ENCODE measurements at regions of chr9 and their contacts with region 1.

Region 1: GRCh38 chr9:91101611-91102168 is 260.0 kb downstream of the AUH start:
- DNase-seq: peak; percentile 97
- ATAC-seq: peak; percentile 91
- H3K4me3 Mint-ChIP-seq: peak overlapping the region; percentile 64
- H3K27ac Mint-ChIP-seq: peak overlapping the region; percentile 90
- H3K4me1 Mint-ChIP-seq: peaks cover 73% of the 10 kb centered on the region
- H3K27me3 Mint-ChIP-seq: no peaks in the 10 kb centered on the region

Region 2: GRCh38 chr9:91059713-91060112 is 42.0 kb before region 1 on chr9:
- CTCF ChIA-PET with region 1: no interaction called
- DNase-seq: peak; percentile 16
- ATAC-seq: no peak
- H3K4me3 Mint-ChIP-seq: no peak overlapping the region
- H3K27ac Mint-ChIP-seq: no peak overlapping the region
- H3K4me1 Mint-ChIP-seq: peaks cover 20% of the 10 kb centered on the region
- H3K27me3 Mint-ChIP-seq: no peaks in the 10 kb centered on the region

Region 3: GRCh38 chr9:91089405-91090129 is 12.1 kb before region 1 on chr9:
- CTCF ChIA-PET with region 1: interaction called, 30 read pairs
- DNase-seq: peak; percentile 56
- ATAC-seq: peak; percentile 76
- H3K4me3 Mint-ChIP-seq: no peak overlapping the region
- H3K27ac Mint-ChIP-seq: peak overlapping the region; percentile 70
- H3K4me1 Mint-ChIP-seq: peaks cover 64% of the 10 kb centered on the region
- H3K27me3 Mint-ChIP-seq: no peaks in the 10 kb centered on the region

Region 4: GRCh38 chr9:91131433-91131839 is 29.7 kb after region 1 on chr9:
- CTCF ChIA-PET with region 1: interaction called, 13 read pairs
- DNase-seq: peak; percentile 96
- ATAC-seq: peak; percentile 98
- H3K4me3 Mint-ChIP-seq: peak overlapping the region; percentile 50
- H3K27ac Mint-ChIP-seq: peak overlapping the region; percentile 94
- H3K4me1 Mint-ChIP-seq: peaks cover 62% of the 10 kb centered on the region
- H3K27me3 Mint-ChIP-seq: no peaks in the 10 kb centered on the region

Region 5: GRCh38 chr9:91395553-91396471 is 294.1 kb after region 1 on chr9:
- CTCF ChIA-PET with region 1: no interaction called
- DNase-seq: peak; percentile 53
- ATAC-seq: peak; percentile 81
- H3K4me3 Mint-ChIP-seq: peak overlapping the region; percentile 56
- H3K27ac Mint-ChIP-seq: peak overlapping the region; percentile 85
- H3K4me1 Mint-ChIP-seq: peaks cover 26% of the 10 kb centered on the region
- H3K27me3 Mint-ChIP-seq: no peaks in the 10 kb centered on the region